ENCODE measurements at regions of chr4 and their contacts with region 1.

Region 1: GRCh38 chr4:185203486-185204237 is at the start of gene CFAP97:
- DNase-seq: peak; percentile 53
- ATAC-seq: peak; percentile 85
- H3K4me3 ChIP-seq: peak within 1 kb of the TSS; percentile 63 to 64
- H3K27ac ChIP-seq: peak within 1 kb of the TSS; percentile 95
- H3K4me1 ChIP-seq: peaks cover 38 to 49% of the 10 kb centered on the region in 2 experiments
- H3K27me3 ChIP-seq: no peaks in the 10 kb centered on the region
- CTCF ChIP-seq: no peak
- POLR2A ChIP-seq: peak; percentile 78
- RAD21 ChIP-seq: no peak
- total RNA-seq, gene CFAP97: 57.7 TPM

Region 2: DNA sequence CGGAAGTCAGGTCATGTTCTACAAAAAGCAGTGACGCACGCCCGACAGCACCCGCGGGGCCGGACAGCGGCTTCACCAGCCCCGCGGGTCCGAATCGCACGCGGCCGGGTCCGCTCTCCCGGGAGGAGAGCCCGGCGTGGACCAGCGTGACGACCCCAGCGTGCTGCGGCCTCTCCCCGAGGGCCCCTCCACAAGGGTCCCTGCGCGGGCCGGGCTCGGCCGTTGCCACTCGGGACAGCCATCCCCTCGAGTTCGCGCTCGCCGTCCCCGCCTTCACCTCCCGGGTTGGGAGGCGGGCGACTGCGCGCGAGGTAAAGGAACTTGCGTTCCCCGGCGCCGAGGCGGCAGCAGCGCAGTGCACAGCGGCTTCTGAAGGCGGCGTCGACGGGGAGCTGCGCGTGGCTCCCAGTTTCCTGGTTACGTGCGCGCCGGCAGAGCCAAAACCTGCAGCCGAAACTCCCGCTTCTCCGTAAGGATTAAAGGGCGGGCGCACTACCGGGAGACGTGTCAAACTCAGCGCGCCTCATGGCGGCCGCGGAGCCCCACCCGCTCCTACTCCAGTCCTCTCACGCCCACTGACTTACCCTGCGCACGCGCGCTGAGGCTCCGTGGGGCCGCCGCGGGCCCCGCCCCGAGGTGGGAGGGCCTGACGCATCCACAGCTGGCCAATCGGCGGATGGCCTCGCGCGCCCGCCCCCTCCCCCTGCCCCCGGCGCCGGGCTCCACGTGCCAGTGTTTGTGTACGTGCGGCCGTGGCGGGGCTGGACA is 192.5 kb after region 1 on chr4:
- CTCF ChIA-PET with region 1: no interaction called
- POLR2A ChIA-PET with region 1: no interaction called
- RAD21 ChIA-PET with region 1: no interaction called
- intact Hi-C with region 1: loop called (anchors 5 kb)
- DNase-seq: peak; percentile 92
- ATAC-seq: peak; percentile 92
- H3K4me3 ChIP-seq: peak overlapping the region; percentile 57 to 61
- H3K27ac ChIP-seq: peak overlapping the region; percentile 90
- H3K4me1 ChIP-seq: peaks cover 11 to 29% of the 10 kb centered on the region in 2 experiments
- H3K27me3 ChIP-seq: no peaks in the 10 kb centered on the region
- CTCF ChIP-seq: no peak
- POLR2A ChIP-seq: peak; percentile 79
- RAD21 ChIP-seq: no peak